ENCODE measurements at regions of chr1 and their contacts with region 1.

Region 1: GRCh38 chr1:186680245-186681061 is at the start of gene PTGS2:
- DNase-seq: peak; percentile 57
- H3K4me3 Mint-ChIP-seq: peak within 1 kb of the TSS; percentile 68
- H3K27ac Mint-ChIP-seq: no peak within 1 kb of the TSS
- H3K4me1 Mint-ChIP-seq: peaks cover 8% of the 10 kb centered on the region
- H3K27me3 Mint-ChIP-seq: peaks cover 38% of the 10 kb centered on the region
- total RNA-seq, gene PTGS2: 2.8 to 2.9 TPM

Region 2: GRCh38 chr1:186482661-186483255 is 197.7 kb before region 1 on chr1:
- CTCF ChIA-PET with region 1: no interaction called
- POLR2A ChIA-PET with region 1: no interaction called
- intact Hi-C with region 1: loop called (anchors 2 kb)
- DNase-seq: peak; percentile 53
- H3K4me3 Mint-ChIP-seq: no peak overlapping the region
- H3K27ac Mint-ChIP-seq: no peak overlapping the region
- H3K4me1 Mint-ChIP-seq: no peaks in the 10 kb centered on the region
- H3K27me3 Mint-ChIP-seq: no peaks in the 10 kb centered on the region

Measured in activated CD4-positive, alpha-beta memory T cell treated with anti-CD3 and anti-CD28 coated beads for 36 hours (primary cell).